Common myeloid progenitor, CD34-positive (primary cell): ENCODE measurements at regions of chr16 and their contacts with region 1.

Region 1: DNA sequence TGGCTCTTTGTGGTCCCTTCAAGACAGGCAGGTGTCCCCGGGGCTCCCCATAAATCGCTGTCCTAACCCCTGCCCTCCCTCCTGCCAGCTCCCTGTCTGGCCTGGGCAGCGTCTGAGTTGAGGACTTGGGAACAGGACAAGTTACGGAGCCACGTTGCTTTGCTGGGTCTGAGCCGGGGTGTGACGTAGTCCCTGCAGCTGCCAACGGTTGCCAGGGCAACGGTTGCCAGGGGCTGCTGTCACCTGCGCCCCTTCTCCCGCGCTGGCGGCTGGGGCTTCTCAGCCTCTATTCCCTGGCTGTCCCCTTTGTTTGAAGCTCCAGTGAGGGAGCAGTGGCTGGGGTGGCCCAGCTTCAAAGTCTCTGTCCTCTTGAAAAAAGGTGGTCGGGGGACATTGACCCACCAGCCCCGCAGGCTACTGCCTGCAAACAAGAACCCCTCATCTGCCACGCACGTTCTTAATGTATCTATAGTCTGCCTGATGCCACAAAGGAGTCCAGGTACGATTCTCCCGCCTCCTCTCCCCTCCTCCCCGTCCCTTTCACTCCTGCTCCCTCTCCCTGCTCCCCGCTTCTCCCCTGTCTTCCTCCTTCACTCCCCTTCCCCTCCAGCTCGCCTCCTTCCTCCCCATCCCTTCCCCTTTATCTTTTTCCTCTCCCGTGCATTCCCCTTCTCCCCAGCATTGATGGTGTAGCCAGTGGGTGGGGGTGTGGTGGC is 10.9 kb downstream of the ADGRG1 start:
- DNase-seq: peak; percentile 51 to 74 (median 70)
- H3K4me3 ChIP-seq: no peak overlapping the region
- H3K27ac ChIP-seq: peak overlapping the region; percentile 13 to 66
- H3K4me1 ChIP-seq: peaks cover 2 to 89% (median 82%) of the 10 kb centered on the region in 4 experiments
- H3K27me3 ChIP-seq: no peaks in the 10 kb centered on the region

Region 2: GRCh38 chr16:57591086-57591869 is 48.1 kb before region 1 on chr16:
- CTCF ChIA-PET with region 1: interaction called, 55 read pairs
- POLR2A ChIA-PET with region 1: interaction called, 3 read pairs
- DNase-seq: peak; percentile 73 to 85 (median 81)
- H3K4me3 ChIP-seq: peak overlapping the region in 1 of 7 experiments; percentile 14
- H3K27ac ChIP-seq: no peak overlapping the region
- H3K4me1 ChIP-seq: peaks cover 10 to 37% (median 34%) of the 10 kb centered on the region in 4 experiments
- H3K27me3 ChIP-seq: no peaks in the 10 kb centered on the region

Region 3: GRCh38 chr16:57600048-57600835 is 39.1 kb before region 1 on chr16:
- CTCF ChIA-PET with region 1: interaction called, 108 read pairs
- POLR2A ChIA-PET with region 1: no interaction called
- DNase-seq: peak in 1 of 3 donors; percentile 48
- H3K4me3 ChIP-seq: no peak overlapping the region
- H3K27ac ChIP-seq: no peak overlapping the region
- H3K4me1 ChIP-seq: peaks cover 19 to 54% (median 50%) of the 10 kb centered on the region in 4 experiments
- H3K27me3 ChIP-seq: no peaks in the 10 kb centered on the region

Region 4: DNA sequence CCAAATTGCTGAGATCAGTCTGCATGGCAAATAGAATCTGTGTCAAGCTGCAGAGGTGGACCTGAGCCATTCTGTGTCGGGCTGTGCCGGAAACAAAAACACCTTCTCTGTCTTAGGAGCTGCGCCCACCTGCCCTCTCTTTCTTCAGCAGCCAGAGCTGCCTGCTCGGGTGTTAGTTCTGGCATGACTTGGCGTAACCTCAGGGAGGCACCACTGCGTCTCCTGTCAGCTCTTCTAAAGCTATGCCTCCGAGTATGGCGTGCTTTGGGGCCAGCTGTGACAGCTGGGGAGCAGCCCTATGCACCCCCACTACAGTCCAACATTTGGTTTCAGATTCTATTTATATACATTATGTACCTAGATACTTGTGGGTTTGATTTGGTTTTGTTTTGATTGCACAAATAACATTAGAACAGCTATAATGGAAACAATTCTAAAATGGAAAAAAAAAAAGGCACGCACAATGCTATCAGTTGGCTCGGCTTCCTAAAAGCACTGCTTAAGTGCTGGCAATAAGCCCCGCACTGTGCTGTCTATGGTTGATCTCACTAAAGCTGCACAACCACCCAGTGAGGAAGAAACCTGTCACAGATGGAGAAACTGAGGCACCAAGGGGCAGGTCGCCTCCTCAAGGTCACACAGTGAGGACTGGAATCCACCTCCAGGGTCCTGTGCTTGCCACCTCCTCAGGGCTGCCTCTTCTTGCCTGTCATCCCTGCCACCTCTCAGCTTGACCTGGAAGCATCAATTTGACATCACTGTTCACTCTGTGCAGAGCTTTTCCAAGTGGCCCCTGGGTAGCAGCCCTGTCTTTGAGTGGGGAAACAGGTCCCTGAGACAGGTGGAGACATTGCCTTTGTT is 29.6 kb before region 1 on chr16:
- CTCF ChIA-PET with region 1: interaction called, 108 read pairs
- POLR2A ChIA-PET with region 1: no interaction called
- DNase-seq: peak in 2 of 3 donors; percentile 86 to 89
- H3K4me3 ChIP-seq: peak overlapping the region in 2 of 7 experiments; percentile 19 to 25
- H3K27ac ChIP-seq: no peak overlapping the region
- H3K4me1 ChIP-seq: peaks cover 17 to 70% (median 59%) of the 10 kb centered on the region in 4 experiments
- H3K27me3 ChIP-seq: no peaks in the 10 kb centered on the region

Region 5: DNA sequence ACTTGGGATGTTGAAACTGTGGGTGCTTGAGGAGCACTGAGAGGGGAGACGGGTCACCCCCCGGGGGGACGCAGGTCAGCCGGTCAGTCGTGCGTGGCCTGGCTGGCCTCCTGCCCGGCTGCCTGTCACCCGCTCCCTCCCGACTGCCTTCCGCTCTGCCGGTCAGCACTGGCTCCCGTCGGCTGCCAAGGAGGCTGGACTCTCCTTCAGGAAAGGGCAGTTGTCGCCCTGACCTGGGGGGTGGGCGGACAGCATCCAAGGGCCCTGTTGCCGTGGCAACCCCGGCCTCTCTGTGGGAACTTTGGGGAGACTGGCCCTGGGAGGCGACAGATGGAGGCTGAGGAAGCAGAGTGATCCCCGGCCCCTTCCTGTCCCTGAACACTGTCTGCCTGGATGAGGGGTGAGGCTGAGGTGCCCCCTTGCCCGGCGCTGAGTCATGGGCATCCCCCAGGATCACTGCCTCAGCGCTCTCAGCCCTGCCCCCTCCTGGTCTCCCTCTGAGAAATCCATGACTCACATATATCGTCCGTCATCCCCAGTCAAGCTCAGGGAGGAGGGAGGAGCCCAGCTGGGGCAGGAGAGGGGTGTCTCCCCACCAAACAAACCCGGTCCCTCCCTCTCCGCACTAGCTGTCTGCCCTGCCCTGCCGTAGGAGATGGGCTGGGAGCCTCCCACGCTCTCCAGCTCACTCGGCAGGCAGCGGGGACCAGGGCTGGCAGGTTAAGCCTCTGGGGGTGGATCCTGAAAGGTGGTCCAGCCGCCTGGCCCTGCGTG is 11.1 kb before region 1 on chr16 and contains the start of gene ADGRG1:
- CTCF ChIA-PET with region 1: interaction called, 65 read pairs
- POLR2A ChIA-PET with region 1: interaction called, 7 read pairs
- DNase-seq: peak; percentile 93 to 98 (median 98)
- H3K4me3 ChIP-seq: peak within 1 kb of the TSS; percentile 65 to 86 (median 81)
- H3K27ac ChIP-seq: peak within 1 kb of the TSS; percentile 68 to 83
- H3K4me1 ChIP-seq: peaks cover 3 to 90% (median 84%) of the 10 kb centered on the region in 4 experiments
- H3K27me3 ChIP-seq: no peaks in the 10 kb centered on the region